HCT116 (cell line): ENCODE measurements at regions of chr11 and their contacts with region 1.

Region 1: GRCh38 chr11:120303004-120303637 is 22.0 kb upstream of the TLCD5 start:
- DNase-seq: peak; percentile 82
- ATAC-seq: peak; percentile 81
- H3K4me3 ChIP-seq: no peak overlapping the region
- H3K27ac ChIP-seq: no peak overlapping the region
- H3K4me1 ChIP-seq: peaks cover 20 to 70% of the 10 kb centered on the region in 2 experiments
- H3K27me3 ChIP-seq: no peaks in the 10 kb centered on the region
- CTCF ChIP-seq: peak; percentile 99 to 100 (median 99)
- POLR2A ChIP-seq: no peak
- RAD21 ChIP-seq: peak; percentile 84

Region 2: GRCh38 chr11:120172054-120172911 is 130.8 kb before region 1 on chr11:
- CTCF ChIA-PET with region 1: interaction called, 10 read pairs
- POLR2A ChIA-PET with region 1: no interaction called
- RAD21 ChIA-PET with region 1: no interaction called
- intact Hi-C with region 1: loop called (anchors 1 kb)
- DNase-seq: peak; percentile 36
- ATAC-seq: peak; percentile 77
- H3K4me3 ChIP-seq: no peak overlapping the region
- H3K27ac ChIP-seq: no peak overlapping the region
- H3K4me1 ChIP-seq: peaks cover 2 to 14% of the 10 kb centered on the region in 2 experiments; a peak in 1 of 4 replicates
- H3K27me3 ChIP-seq: peaks cover 31% of the 10 kb centered on the region
- CTCF ChIP-seq: peak; percentile 76 to 90 (median 77)
- POLR2A ChIP-seq: no peak
- RAD21 ChIP-seq: peak; percentile 97

Region 3: DNA sequence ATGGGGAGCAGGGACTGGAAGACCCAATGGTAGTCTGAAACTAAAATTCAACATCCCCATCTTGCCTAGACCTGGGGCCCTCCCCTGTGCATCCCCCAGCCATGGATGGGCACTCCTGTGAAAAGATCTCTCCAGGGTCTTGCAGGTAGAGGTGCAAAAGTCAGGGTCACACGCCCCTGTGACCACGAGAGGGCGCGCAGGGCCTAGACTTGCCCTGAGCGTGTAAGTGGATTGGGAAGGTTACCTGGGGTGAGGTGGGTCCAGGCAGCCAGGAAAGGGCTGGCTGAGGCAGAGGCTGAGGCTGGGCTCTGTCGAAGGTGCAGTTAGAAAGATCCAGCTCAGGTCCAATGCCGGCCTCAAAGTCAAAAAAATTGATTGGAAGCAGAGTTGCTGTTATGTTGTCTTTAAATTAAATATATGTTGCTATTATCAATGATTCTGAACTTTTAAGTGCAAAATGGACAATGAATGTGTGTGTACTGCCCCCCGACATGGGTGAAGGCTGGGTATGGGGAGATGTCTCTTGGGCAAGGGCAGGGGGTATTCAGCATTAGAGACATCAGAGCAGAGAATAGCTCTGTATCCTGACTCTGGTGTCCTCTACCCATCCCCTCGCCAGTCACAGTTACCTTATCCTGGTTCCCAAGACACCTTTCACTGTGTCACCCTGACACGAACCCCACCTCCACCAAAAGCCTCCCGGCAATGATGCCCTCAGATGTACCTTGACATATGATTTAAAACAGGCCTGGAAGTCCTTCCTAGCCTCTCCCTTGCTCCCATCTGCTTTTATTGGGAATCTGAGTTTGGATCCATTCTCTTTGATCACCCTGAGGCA is 67.9 kb before region 1 on chr11:
- CTCF ChIA-PET with region 1: interaction called, 240 read pairs
- POLR2A ChIA-PET with region 1: interaction called, 37 read pairs
- RAD21 ChIA-PET with region 1: interaction called, 4 to 7 read pairs
- intact Hi-C with region 1: loop called (anchors 1 kb)
- DNase-seq: peak; percentile 64
- ATAC-seq: peak; percentile 92
- H3K4me3 ChIP-seq: no peak overlapping the region
- H3K27ac ChIP-seq: no peak overlapping the region
- H3K4me1 ChIP-seq: no peaks in the 10 kb centered on the region
- H3K27me3 ChIP-seq: no peaks in the 10 kb centered on the region; the same call in 1 of the 2 replicates
- CTCF ChIP-seq: peak; percentile 93 to 97 (median 93)
- POLR2A ChIP-seq: no peak
- RAD21 ChIP-seq: peak; percentile 98

Region 4: DNA sequence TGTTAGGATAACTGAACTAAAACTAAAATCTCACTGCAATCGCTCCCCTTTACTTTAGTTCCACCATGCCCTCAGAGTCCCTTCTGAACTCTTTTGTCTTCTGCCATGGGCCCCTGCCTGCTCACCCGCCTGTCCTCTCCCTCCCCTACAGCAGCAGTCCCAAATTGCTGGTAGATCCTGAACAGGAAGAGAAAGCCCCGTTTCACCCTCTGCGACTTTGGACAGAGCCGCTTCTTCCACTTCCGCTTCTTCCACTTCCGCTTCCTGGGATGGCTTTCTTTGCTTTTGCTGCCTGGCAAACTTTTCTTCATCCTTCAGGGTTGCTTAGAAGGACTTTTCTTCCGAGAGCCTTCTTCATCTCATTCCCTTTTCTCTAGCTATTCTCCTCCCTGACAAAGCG is 13.7 kb before region 1 on chr11:
- CTCF ChIA-PET with region 1: interaction called, 18 read pairs
- POLR2A ChIA-PET with region 1: no interaction called
- RAD21 ChIA-PET with region 1: no interaction called
- intact Hi-C with region 1: no loop called
- DNase-seq: no peak
- ATAC-seq: no peak
- H3K4me3 ChIP-seq: no peak overlapping the region
- H3K27ac ChIP-seq: no peak overlapping the region
- H3K4me1 ChIP-seq: no peaks in the 10 kb centered on the region; a peak in 1 of 4 replicates
- H3K27me3 ChIP-seq: peaks cover 38% of the 10 kb centered on the region; the same call in 1 of the 2 replicates
- CTCF ChIP-seq: no peak
- POLR2A ChIP-seq: no peak
- RAD21 ChIP-seq: no peak

Region 5: GRCh38 chr11:120324932-120325810 is 22.1 kb after region 1 on chr11 and contains the start of gene TLCD5:
- CTCF ChIA-PET with region 1: interaction called, 17 read pairs
- POLR2A ChIA-PET with region 1: interaction called, 4 read pairs
- RAD21 ChIA-PET with region 1: no interaction called
- intact Hi-C with region 1: no loop called
- DNase-seq: peak; percentile 54
- ATAC-seq: peak; percentile 92
- H3K4me3 ChIP-seq: peak within 1 kb of the TSS; percentile 64 to 67
- H3K27ac ChIP-seq: peak within 1 kb of the TSS; percentile 79
- H3K4me1 ChIP-seq: peaks cover 15 to 21% of the 10 kb centered on the region in 2 experiments
- H3K27me3 ChIP-seq: no peaks in the 10 kb centered on the region
- CTCF ChIP-seq: peak in 1 of 3 experiments; percentile 19; a peak in 1 of 6 replicates
- POLR2A ChIP-seq: no peak
- RAD21 ChIP-seq: no peak; the same call in 1 of the 2 replicates
- total RNA-seq, gene TLCD5: 9.1 TPM